Sciatic nerve (tissue), 2 donors: ENCODE measurements at regions of chr19 and their contacts with region 1.

Region 1: GRCh38 chr19:10565567-10566407 is at the start of gene KRI1:
- DNase-seq: peak; percentile 99
- ATAC-seq: peak; percentile 92
- total RNA-seq, gene KRI1: 25.0 TPM

Region 2: GRCh38 chr19:10416380-10417257 is 149.2 kb before region 1 on chr19:
- intact Hi-C with region 1: loop called (anchors 10 kb)
- DNase-seq: peak; percentile 87
- ATAC-seq: peak; percentile 82

Region 3: GRCh38 chr19:10533646-10534386 is 32.0 kb before region 1 on chr19:
- intact Hi-C with region 1: no loop called
- DNase-seq: no peak
- ATAC-seq: no peak